Posterior cingulate gyrus (tissue), 11 donors: ENCODE measurements at regions of chrX and their contacts with region 1.

Region 1: GRCh38 chrX:134727371-134727770 is 69.1 kb upstream of the PLAC1 start:
- DNase-seq: no peak

Region 2: GRCh38 chrX:134423615-134424014 is 303.8 kb before region 1 on chrX:
- intact Hi-C with region 1: no loop called
- DNase-seq: no peak

Region 3: DNA sequence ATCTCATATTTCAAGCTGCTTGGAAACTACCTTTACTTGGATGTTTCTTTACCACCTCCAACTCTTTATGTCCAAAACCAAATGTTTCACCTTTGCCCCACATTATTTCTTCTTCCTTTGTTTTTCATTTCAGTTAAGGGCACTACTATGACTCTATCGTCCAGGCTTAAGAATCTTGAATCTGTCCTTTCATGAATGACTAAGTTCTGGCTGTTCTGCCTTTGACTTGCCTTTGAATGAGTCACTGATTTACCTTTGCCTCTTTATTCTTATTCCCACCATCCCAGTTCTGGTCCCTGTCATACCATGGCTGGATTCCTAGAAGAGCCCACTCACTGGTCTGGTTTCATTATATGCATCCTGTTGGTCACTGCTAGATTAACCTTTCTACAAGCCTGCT is 38.5 kb before region 1 on chrX:
- intact Hi-C with region 1: loop called (anchors 1 kb)
- DNase-seq: no peak